ENCODE measurements at regions of chr16 and their contacts with region 1.

Region 1: DNA sequence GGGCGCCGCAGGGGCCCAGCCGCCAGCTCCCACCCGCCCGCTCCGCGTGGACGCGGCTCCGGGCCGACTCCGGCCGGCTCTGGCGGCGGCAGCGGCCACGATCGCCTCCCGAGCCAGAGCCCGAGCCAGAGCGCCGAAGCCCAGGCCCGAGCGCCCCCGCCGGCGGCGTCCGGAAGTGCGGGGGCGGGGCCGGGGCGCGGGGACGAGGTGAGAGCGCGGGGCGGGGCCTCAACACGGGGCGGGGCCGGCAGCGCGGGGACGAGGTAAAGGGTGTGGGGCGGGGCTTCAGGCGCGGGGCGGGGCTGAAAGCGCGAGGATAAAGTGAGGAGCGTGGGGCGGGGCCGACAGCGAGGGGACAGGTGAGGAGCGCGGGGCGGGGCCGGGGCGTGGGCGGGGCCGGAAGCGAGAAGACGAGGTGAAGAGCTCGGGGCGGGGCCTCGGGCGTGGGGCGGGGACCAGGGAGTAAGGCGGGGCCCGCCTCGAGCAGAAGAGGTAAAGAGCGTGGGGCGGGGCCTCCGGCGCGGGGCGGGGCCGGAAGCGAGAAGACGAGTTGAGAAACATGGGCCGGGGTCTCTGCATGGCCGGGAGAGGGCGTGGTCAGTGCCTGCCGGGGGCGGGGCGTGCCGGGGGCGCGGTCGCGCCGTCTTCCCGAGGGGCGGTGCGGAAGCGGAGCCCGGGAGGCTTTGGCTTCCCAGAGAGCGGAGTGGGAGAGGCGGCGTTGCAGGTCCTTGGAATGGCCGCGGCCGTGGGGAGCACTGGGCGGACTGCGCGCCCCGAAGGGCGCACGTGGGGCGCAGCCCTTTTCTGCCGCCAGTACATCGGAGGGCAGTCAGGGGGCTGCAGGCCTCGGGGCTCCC is at the start of gene AXIN1:
- DNase-seq: peak; percentile 85
- H3K4me3 ChIP-seq: peak within 1 kb of the TSS; percentile 33 to 62 (median 55)
- H3K27ac ChIP-seq: no peak within 1 kb of the TSS
- H3K4me1 ChIP-seq: peaks cover 6% of the 10 kb centered on the region
- H3K27me3 ChIP-seq: no peaks in the 10 kb centered on the region
- CTCF ChIP-seq: peak; percentile 17 to 35
- POLR2A ChIP-seq: peak; percentile 65
- total RNA-seq, gene AXIN1: 21.1 and 21.9 TPM in 2 replicates

Region 2: DNA sequence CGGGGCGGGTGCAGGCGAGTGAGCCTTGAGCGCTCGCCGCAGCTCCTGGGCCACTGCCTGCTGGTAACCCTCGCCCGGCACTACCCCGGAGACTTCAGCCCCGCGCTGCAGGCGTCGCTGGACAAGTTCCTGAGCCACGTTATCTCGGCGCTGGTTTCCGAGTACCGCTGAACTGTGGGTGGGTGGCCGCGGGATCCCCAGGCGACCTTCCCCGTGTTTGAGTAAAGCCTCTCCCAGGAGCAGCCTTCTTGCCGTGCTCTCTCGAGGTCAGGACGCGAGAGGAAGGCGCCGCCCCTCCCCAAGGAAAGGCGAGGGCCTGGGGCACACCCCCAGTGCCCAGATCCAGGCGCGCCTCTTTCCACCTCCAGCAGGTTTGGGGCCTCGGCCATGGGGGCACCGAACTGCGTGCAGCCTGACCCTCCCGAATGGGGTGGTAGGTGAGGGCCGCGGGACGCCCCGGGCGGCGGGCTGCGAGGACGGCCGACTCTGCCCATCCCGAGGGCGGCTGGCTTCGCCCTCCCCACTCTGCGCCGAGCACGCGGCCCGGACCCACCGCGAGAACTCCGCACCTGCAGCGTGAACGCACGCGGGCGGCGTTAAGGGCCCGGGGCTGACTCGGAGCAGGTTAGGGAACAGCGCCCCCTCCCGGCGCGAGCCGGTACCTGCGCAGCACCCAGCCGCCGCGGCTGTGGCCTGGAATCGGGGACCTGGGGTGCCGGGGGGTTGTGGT is 171.7 kb before region 1 on chr16:
- CTCF ChIA-PET with region 1: no interaction called
- POLR2A ChIA-PET with region 1: no interaction called
- dilution Hi-C with region 1: no loop called
- intact Hi-C with region 1: loop called (anchors 5 kb)
- DNase-seq: peak; percentile 71
- H3K4me3 ChIP-seq: no peak overlapping the region
- H3K27ac ChIP-seq: no peak overlapping the region
- H3K4me1 ChIP-seq: peaks cover 5% of the 10 kb centered on the region
- H3K27me3 ChIP-seq: peaks cover 19 to 25% of the 10 kb centered on the region in 2 experiments
- CTCF ChIP-seq: peak; percentile 95 to 98
- POLR2A ChIP-seq: peak; percentile 48

Region 3: GRCh38 chr16:228818-229730 is 123.7 kb before region 1 on chr16 and contains the start of gene LUC7L:
- CTCF ChIA-PET with region 1: interaction called, 6 read pairs
- POLR2A ChIA-PET with region 1: no interaction called
- dilution Hi-C with region 1: no loop called
- intact Hi-C with region 1: loop called (anchors 1 kb)
- DNase-seq: peak; percentile 92
- H3K4me3 ChIP-seq: peak within 1 kb of the TSS; percentile 73 to 76 (median 75)
- H3K27ac ChIP-seq: peak within 1 kb of the TSS; percentile 63
- H3K4me1 ChIP-seq: peaks cover 12% of the 10 kb centered on the region
- H3K27me3 ChIP-seq: no peaks in the 10 kb centered on the region
- CTCF ChIP-seq: no peak
- POLR2A ChIP-seq: peak; percentile 99
- total RNA-seq, gene LUC7L: 86.6 and 94.7 TPM in 2 replicates

Region 4: GRCh38 chr16:265711-266110 is 87.1 kb before region 1 on chr16:
- CTCF ChIA-PET with region 1: no interaction called
- POLR2A ChIA-PET with region 1: no interaction called
- dilution Hi-C with region 1: no loop called
- intact Hi-C with region 1: no loop called
- DNase-seq: no peak
- H3K4me3 ChIP-seq: no peak overlapping the region
- H3K27ac ChIP-seq: no peak overlapping the region
- H3K4me1 ChIP-seq: no peaks in the 10 kb centered on the region
- H3K27me3 ChIP-seq: no peaks in the 10 kb centered on the region
- CTCF ChIP-seq: no peak
- POLR2A ChIP-seq: no peak

Region 5: GRCh38 chr16:370443-370842 is 17.7 kb after region 1 on chr16 and contains the start of gene MRPL28:
- CTCF ChIA-PET with region 1: interaction called, 3 read pairs
- POLR2A ChIA-PET with region 1: no interaction called
- dilution Hi-C with region 1: no loop called
- intact Hi-C with region 1: loop called (anchors 1 kb)
- DNase-seq: peak; percentile 96
- H3K4me3 ChIP-seq: peak within 1 kb of the TSS in 2 of 3 experiments; percentile 3 to 47
- H3K27ac ChIP-seq: no peak within 1 kb of the TSS
- H3K4me1 ChIP-seq: peaks cover 8% of the 10 kb centered on the region
- H3K27me3 ChIP-seq: no peaks in the 10 kb centered on the region
- CTCF ChIP-seq: no peak
- POLR2A ChIP-seq: peak; percentile 71
- total RNA-seq, gene MRPL28: 86.3 and 104 TPM in 2 replicates

Region 6: DNA sequence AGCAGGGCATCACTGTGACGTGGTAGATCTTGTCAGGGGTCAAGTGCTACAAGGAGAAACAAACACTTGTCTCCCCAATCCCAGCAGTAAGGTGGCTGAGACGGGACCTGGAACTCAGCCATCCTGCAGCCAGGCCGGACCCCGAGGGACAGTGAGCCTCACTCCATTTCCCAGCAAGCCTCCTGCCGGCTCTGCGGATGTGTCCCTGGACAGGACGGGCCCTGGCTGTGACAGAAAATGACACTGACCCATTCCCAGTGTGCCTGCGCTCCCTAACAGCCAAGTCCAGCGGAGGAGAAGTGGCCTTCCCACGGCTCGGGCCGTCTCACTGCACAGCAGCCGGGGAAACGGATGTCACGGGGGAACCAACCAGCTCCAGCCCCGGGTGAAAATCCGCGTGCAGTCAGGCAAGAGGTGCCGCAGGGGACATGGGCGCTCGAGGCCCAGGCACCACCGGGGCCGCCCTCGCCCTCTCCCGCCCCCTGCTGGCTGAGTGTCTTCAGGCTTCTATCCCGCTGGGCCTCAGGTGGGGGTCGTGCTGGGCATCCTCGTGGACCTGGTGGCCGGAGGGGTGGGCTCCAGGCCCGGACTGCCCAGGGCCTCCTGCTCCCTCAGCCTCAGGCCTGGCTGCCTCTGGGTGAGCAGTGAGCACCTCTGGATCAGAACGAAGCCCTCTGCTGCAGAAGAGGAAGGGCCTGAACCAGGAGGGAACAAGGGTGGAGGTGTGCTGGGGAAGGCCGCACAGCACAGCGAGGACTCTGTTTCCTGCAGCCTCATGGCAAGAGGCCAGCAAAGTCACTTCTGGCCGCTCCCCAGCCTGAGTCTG is 380.8 kb after region 1 on chr16:
- CTCF ChIA-PET with region 1: no interaction called
- POLR2A ChIA-PET with region 1: no interaction called
- dilution Hi-C with region 1: no loop called
- intact Hi-C with region 1: no loop called
- DNase-seq: no peak
- H3K4me3 ChIP-seq: no peak overlapping the region
- H3K27ac ChIP-seq: no peak overlapping the region
- H3K4me1 ChIP-seq: peaks cover under 1% of the 10 kb centered on the region
- H3K27me3 ChIP-seq: no peaks in the 10 kb centered on the region
- CTCF ChIP-seq: peak; percentile 37 to 58
- POLR2A ChIP-seq: no peak

Measured in endothelial cell of umbilical vein (primary cell).